Activated T-helper 1 cell treated with anti-CD3 and anti-CD28 coated beads, Interleukin-12 subunit alpha, Interleukin-12 subunit beta, Interleukin-2, Interleukin-4 antibody, amounts not matched to agents 30 ng/mL and 10 ng/mL and 1 ng/mL, durations not matched to agents 14 hours and 24 hours and 36 hours (primary cell): ENCODE measurements at regions of chr1 and their contacts with region 1.

Region 1: GRCh38 chr1:17125756-17126237 is 6.5 kb upstream of the PADI2 start:
- DNase-seq: peak; percentile 62
- H3K4me3 Mint-ChIP-seq: no peak overlapping the region
- H3K27ac Mint-ChIP-seq: no peak overlapping the region
- H3K4me1 Mint-ChIP-seq: no peaks in the 10 kb centered on the region
- H3K27me3 Mint-ChIP-seq: peaks cover 7% of the 10 kb centered on the region

Region 2: DNA sequence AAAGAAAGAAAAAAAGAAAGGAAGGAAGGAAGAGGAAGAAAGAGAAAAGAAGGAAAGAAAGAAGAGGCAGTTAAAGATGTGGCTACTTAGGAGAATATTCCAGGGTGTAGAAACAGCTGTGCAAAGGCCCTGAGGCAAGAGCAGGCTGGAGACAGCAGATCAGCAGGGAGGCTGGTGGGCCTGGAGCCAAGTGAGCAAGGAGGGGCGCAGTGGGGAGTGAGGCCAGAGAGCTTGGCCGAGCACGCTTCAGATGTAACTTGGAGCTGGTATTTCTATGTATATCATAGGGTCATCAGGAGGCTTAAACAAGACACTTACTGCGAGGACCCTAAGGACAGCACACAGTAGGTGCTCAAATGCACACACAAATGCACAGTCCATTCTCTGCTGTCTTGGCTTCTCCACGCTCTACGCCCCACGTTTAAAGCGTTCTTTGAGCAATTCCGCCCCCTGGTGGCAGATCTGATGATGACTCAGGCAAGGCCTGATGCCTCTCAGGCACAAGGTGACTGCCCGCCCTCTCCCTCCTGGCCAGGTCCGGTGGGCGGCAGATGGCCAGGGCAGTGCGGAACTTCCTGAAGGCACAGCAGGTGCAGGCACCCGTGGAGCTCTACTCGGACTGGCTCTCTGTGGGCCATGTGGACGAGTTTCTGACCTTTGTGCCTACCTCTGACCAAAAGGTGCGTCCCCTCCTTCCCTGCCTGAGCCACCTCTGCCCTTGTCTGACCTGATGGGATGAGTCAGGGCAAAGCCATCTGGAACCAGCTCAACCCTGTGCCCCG is 111.2 kb after region 1 on chr1:
- intact Hi-C with region 1: loop called (anchors 1 kb)
- DNase-seq: peak; percentile 69
- H3K4me3 Mint-ChIP-seq: no peak overlapping the region
- H3K27ac Mint-ChIP-seq: no peak overlapping the region
- H3K4me1 Mint-ChIP-seq: no peaks in the 10 kb centered on the region
- H3K27me3 Mint-ChIP-seq: peaks cover 12% of the 10 kb centered on the region

Region 3: DNA sequence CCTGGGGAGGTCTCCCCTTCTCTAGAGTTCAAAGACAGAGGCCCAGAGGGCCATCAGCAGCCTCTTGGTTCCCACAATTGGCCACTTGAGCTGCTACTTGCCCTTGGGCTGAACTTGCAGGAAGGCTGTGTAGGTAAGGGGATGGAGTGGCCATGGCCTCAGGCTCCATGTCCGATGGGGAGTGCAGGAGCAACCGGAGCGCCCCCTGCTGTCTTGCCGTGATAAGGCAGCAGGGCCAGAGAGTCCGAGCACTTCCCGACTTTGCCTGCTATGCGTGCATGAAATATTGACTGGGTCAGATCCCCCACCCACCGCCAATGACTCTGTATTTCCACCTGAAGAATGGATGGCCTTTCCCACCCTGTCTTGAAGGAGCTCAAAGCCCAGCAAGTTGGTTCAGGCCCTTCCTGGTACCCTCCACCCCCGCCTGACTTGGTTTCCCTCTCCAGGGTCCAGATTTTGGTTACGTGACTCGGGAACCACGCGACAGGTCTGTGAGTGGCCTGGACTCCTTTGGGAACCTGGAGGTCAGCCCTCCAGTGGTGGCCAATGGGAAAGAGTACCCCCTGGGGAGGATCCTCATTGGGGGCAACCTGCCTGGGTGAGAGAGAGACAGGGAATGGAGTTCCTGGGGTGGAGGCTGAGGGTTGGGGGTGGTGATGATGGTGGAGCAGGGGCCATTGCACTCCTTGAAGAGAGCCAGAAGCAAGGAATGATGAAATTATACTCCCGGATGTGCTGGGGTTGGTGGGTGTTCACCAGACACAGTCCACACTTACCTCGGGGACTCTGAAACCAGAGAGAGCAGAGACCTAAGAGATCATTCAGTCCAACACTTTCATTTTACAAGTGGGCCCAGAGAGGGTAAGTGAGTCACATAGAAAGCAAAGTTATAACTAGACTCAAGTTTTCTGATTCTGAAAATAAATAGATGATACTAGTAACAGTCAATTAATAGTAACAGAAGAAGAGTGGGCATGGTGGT is 148.7 kb after region 1 on chr1:
- intact Hi-C with region 1: no loop called
- DNase-seq: no peak
- H3K4me3 Mint-ChIP-seq: no peak overlapping the region
- H3K27ac Mint-ChIP-seq: no peak overlapping the region
- H3K4me1 Mint-ChIP-seq: no peaks in the 10 kb centered on the region
- H3K27me3 Mint-ChIP-seq: no peaks in the 10 kb centered on the region

Region 4: DNA sequence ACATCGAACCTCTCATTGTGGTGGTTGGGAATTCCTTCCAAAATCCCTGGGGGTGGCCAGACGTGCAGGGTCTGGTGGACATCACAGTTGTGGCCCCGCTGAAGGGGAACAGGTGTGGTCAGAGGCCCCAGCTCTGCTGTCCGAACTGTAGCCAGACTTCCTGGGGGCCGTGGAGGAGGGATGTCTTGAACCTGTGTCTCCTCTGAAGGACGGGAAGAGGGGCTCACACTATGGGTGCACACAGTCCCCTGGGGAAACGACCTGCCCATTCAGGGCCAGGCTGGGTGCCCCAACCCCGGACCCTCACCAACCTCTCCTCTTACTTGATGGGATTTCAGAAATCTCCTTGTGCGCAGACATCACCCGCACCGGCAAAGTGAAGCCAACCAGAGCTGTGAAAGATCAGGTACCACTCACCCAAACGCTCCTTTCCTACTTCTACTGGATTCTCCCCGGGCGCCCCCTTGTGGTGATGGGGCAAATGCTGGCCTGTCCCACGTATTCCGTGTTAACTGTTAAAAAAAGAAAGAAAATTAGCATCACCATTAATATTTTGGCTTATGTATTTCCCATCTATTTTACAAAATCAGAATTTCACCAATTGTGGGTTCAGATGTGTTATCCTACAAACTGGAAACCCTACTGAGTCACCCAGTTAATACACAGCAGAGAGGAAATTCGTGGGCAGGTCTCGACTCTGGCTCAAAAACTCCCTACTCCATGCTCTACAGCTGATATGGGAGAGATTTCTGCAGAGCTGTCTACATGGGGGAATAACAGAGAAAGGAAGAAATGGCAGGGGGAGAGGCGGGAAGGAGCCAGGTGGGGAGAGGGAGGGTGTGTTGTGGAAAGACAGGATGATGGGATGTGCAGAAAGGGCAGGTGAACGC is 210.3 kb after region 1 on chr1:
- intact Hi-C with region 1: loop called (anchors 5 kb)
- DNase-seq: peak; percentile 22
- H3K4me3 Mint-ChIP-seq: no peak overlapping the region
- H3K27ac Mint-ChIP-seq: no peak overlapping the region
- H3K4me1 Mint-ChIP-seq: peaks cover 5% of the 10 kb centered on the region
- H3K27me3 Mint-ChIP-seq: peaks cover 6% of the 10 kb centered on the region